ENCODE measurements at regions of chr12 and their contacts with region 1.

Region 1: GRCh38 chr12:10012630-10013330 is 2.4 kb downstream of the CLEC12B start:
- DNase-seq: no peak
- ATAC-seq: no peak
- H3K4me3 ChIP-seq: no peak overlapping the region
- H3K27ac ChIP-seq: no peak overlapping the region
- H3K4me1 ChIP-seq: no peaks in the 10 kb centered on the region
- H3K27me3 ChIP-seq: peaks cover 47% of the 10 kb centered on the region
- CTCF ChIP-seq: no peak
- POLR2A ChIP-seq: no peak
- RAD21 ChIP-seq: no peak

Region 2: GRCh38 chr12:10001171-10001776 is 11.5 kb before region 1 on chr12:
- CTCF ChIA-PET with region 1: interaction called, 14 read pairs
- POLR2A ChIA-PET with region 1: no interaction called
- RAD21 ChIA-PET with region 1: no interaction called
- intact Hi-C with region 1: no loop called
- DNase-seq: no peak
- ATAC-seq: no peak
- H3K4me3 ChIP-seq: no peak overlapping the region
- H3K27ac ChIP-seq: no peak overlapping the region
- H3K4me1 ChIP-seq: no peaks in the 10 kb centered on the region
- H3K27me3 ChIP-seq: peaks cover 28% of the 10 kb centered on the region
- CTCF ChIP-seq: no peak
- POLR2A ChIP-seq: no peak
- RAD21 ChIP-seq: no peak

Region 3: GRCh38 chr12:10395390-10395998 is 382.7 kb after region 1 on chr12:
- CTCF ChIA-PET with region 1: no interaction called
- POLR2A ChIA-PET with region 1: no interaction called
- RAD21 ChIA-PET with region 1: no interaction called
- intact Hi-C with region 1: no loop called
- DNase-seq: no peak
- ATAC-seq: no peak
- H3K4me3 ChIP-seq: no peak overlapping the region
- H3K27ac ChIP-seq: peak overlapping the region; percentile 49
- H3K4me1 ChIP-seq: peaks cover 20 to 45% of the 10 kb centered on the region in 2 experiments
- H3K27me3 ChIP-seq: no peaks in the 10 kb centered on the region
- CTCF ChIP-seq: no peak
- POLR2A ChIP-seq: no peak
- RAD21 ChIP-seq: no peak

Measured in HCT116 (cell line).